ENCODE measurements at regions of chr14 and their contacts with region 1.

Region 1: GRCh38 chr14:94439453-94440057 is 13.0 kb downstream of the SERPINA11 start:
- DNase-seq: no peak
- H3K4me3 Mint-ChIP-seq: no peak overlapping the region
- H3K27ac Mint-ChIP-seq: no peak overlapping the region
- H3K4me1 Mint-ChIP-seq: no peaks in the 10 kb centered on the region
- H3K27me3 Mint-ChIP-seq: peaks cover 57% of the 10 kb centered on the region
- CTCF ChIP-seq: no peak

Region 2: DNA sequence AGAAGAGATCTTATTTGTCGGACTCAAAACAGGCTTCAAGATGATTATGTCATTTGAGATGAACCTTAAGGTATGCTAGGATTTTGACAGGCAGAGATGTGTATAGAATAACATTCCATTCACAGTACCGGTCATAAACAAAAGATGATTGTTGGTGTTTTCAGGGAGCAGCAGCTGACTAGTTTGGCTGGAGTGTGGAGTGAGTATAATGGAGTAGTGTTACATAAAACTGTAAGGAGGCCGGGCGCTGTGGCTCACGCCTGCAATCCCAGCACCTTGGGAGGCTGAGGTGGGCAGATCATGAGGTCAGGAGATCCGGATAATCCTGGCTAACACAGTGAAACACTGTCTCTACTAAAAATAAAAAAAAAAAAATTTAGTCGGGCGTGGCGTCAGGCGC is 170.4 kb before region 1 on chr14:
- CTCF ChIA-PET with region 1: no interaction called
- intact Hi-C with region 1: no loop called
- DNase-seq: peak; percentile 30
- H3K4me3 Mint-ChIP-seq: peak overlapping the region; percentile 31
- H3K27ac Mint-ChIP-seq: peak overlapping the region; percentile 22
- H3K4me1 Mint-ChIP-seq: peaks cover 12% of the 10 kb centered on the region
- H3K27me3 Mint-ChIP-seq: no peaks in the 10 kb centered on the region
- CTCF ChIP-seq: no peak

Region 3: GRCh38 chr14:94548999-94549985 is 109.7 kb after region 1 on chr14:
- CTCF ChIA-PET with region 1: no interaction called
- intact Hi-C with region 1: loop called (anchors 1 kb)
- DNase-seq: peak; percentile 77
- H3K4me3 Mint-ChIP-seq: no peak overlapping the region
- H3K27ac Mint-ChIP-seq: no peak overlapping the region
- H3K4me1 Mint-ChIP-seq: no peaks in the 10 kb centered on the region
- H3K27me3 Mint-ChIP-seq: no peaks in the 10 kb centered on the region
- CTCF ChIP-seq: peak; percentile 88

Region 4: DNA sequence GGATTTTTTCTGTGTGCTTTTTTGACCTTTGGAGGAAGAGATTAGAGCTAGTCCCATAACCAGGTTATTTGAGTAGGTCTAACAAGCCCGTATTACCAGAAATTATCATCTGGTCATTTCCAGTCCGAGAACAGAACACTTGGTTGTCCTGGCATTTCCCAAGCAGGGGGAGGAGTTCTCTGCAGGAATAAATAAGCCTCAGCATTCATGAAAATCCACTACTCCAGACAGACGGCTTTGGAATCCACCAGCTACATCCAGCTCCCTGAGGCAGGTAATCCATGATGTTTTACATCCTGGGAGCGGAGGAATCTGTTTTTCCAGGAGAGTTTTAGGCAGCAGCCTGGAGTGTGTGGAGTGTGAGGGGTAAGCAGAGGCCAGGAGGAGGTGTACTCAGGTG is 172.6 kb after region 1 on chr14 and contains the start of gene SERPINA3:
- CTCF ChIA-PET with region 1: interaction called, 3 read pairs
- intact Hi-C with region 1: loop called (anchors 10 kb)
- DNase-seq: peak; percentile 66
- H3K4me3 Mint-ChIP-seq: peak within 1 kb of the TSS; percentile 77
- H3K27ac Mint-ChIP-seq: no peak within 1 kb of the TSS
- H3K4me1 Mint-ChIP-seq: peaks cover 34% of the 10 kb centered on the region
- H3K27me3 Mint-ChIP-seq: no peaks in the 10 kb centered on the region
- CTCF ChIP-seq: no peak
- total RNA-seq, gene SERPINA3: 1,748 and 2,914 TPM in 2 replicates

Region 5: GRCh38 chr14:94681300-94682060 is 241.9 kb after region 1 on chr14:
- CTCF ChIA-PET with region 1: no interaction called
- intact Hi-C with region 1: loop called (anchors 2 kb)
- DNase-seq: peak; percentile 58
- H3K4me3 Mint-ChIP-seq: no peak overlapping the region
- H3K27ac Mint-ChIP-seq: no peak overlapping the region
- H3K4me1 Mint-ChIP-seq: no peaks in the 10 kb centered on the region
- H3K27me3 Mint-ChIP-seq: no peaks in the 10 kb centered on the region
- CTCF ChIP-seq: peak; percentile 38

Measured in Calu3 (cell line).